Upper lobe of right lung (tissue), 1 donor: ENCODE measurements at regions of chr5 and their contacts with region 1.

Region 1: GRCh38 chr5:139633295-139634027 is 14.7 kb upstream of the CXXC5 start:
- DNase-seq: peak; percentile 76
- ATAC-seq: peak; percentile 71
- H3K4me3 ChIP-seq: no peak overlapping the region
- H3K27ac ChIP-seq: no peak overlapping the region
- H3K4me1 ChIP-seq: peaks cover 26% of the 10 kb centered on the region
- H3K27me3 ChIP-seq: no peaks in the 10 kb centered on the region
- CTCF ChIP-seq: peak; percentile 97

Region 2: DNA sequence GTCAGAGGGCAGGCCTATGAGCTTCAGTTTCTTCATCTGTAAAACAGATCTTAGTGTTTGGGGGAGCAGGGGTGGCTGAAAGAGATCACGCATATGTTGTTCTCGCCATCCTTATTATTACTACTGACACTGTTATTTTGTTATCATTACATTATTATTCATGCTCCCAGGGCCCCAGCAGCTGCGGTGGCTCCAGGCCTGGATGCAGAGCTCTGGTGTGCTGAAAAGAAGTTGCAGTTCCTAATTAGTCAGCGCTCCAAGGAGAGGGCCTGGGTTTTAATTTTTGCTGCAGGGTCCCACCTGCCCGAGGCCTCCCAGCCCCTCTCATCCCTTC is 34.2 kb after region 1 on chr5:
- intact Hi-C with region 1: loop called (anchors 2 kb)
- DNase-seq: no peak
- ATAC-seq: no peak
- H3K4me3 ChIP-seq: peak overlapping the region; percentile 49
- H3K27ac ChIP-seq: peak overlapping the region; percentile 81
- H3K4me1 ChIP-seq: peaks cover 73% of the 10 kb centered on the region
- H3K27me3 ChIP-seq: no peaks in the 10 kb centered on the region
- CTCF ChIP-seq: no peak

Region 3: GRCh38 chr5:139696894-139697658 is 63.6 kb after region 1 on chr5:
- intact Hi-C with region 1: loop called (anchors 10 kb)
- DNase-seq: peak; percentile 84
- ATAC-seq: peak; percentile 75
- H3K4me3 ChIP-seq: peak overlapping the region; percentile 44
- H3K27ac ChIP-seq: peak overlapping the region; percentile 75
- H3K4me1 ChIP-seq: peaks cover 31% of the 10 kb centered on the region
- H3K27me3 ChIP-seq: no peaks in the 10 kb centered on the region
- CTCF ChIP-seq: no peak

Region 4: GRCh38 chr5:139765409-139766217 is 132.2 kb after region 1 on chr5:
- intact Hi-C with region 1: loop called (anchors 5 kb)
- DNase-seq: peak; percentile 92
- ATAC-seq: peak; percentile 95
- H3K4me3 ChIP-seq: peak overlapping the region; percentile 64
- H3K27ac ChIP-seq: no peak overlapping the region
- H3K4me1 ChIP-seq: peaks cover 5% of the 10 kb centered on the region
- H3K27me3 ChIP-seq: peaks cover 31% of the 10 kb centered on the region
- CTCF ChIP-seq: peak; percentile 96

Region 5: DNA sequence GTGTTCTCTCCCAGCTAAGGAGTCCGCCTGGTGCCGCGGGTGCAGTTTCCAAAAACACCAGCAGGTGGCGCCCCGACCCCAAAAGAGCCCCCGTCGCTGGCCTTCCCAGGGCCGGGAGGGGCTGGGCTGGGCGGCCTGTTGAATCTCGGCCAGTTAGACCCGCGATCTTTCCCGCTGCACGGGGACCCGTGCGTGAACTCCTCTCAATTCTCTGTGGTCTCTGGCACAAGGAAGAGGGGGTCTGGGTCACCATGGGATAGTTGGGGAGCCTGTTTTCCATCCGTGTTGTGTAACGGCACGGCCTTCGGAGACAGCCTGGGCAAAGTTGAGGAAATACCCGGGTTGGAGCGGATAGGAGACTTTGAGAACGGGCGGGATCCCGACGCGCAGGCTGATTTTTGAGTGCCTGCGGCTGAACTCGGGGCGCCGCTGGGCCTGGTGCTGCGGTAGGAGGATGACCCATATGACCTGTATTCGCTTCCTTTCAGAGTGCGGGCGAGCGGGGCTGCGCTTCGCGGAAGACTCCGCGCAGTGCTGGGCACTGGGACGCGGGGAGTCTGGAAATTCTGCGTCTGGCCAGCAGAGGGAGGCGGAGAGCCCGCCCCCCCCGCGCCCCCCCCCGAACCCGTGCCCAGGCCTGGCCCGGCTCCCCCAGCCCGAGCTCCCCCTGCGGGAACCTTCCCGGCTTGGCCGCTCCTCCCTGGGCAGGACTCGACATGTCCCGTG is 154.3 kb after region 1 on chr5:
- intact Hi-C with region 1: no loop called
- DNase-seq: peak; percentile 91
- ATAC-seq: peak; percentile 94
- H3K4me3 ChIP-seq: peak overlapping the region; percentile 74
- H3K27ac ChIP-seq: peak overlapping the region; percentile 51
- H3K4me1 ChIP-seq: peaks cover 4% of the 10 kb centered on the region
- H3K27me3 ChIP-seq: peaks cover 15% of the 10 kb centered on the region
- CTCF ChIP-seq: peak; percentile 91